ENCODE measurements at regions of chr7 and their contacts with region 1.

Region 1: DNA sequence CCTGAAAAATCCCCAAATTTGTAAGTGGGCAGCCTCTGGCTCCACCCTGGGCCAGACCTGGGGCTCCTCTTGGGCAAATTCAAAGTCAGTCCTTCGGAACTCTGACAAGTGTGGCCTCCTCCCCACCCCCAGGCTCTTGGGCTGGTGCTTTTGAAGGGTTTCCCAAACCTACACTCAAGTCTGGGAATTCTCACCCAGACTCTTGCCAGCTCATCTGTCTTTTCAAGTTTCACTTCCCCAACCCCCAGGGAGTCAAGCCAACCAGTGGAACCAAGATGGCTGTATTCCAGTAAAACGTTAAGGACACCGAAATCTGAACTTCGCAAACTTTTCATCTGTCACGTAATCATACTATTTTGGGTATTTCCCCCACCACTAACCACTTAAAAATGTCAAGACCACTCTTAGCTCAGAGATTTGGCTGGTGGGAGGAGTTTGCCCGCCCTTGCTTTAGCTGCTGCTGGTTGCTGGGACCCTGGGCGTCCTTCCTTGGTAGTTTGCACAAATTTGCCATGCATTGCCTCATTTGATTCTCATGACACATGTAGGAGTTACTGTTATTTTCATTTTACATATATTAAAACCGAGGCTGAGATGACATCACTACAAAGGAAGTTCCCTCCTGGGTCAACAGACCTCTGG is 1.7 kb upstream of the MYO1G start:
- DNase-seq: peak; percentile 59
- ATAC-seq: peak; percentile 10
- H3K4me3 Mint-ChIP-seq: peak overlapping the region; percentile 94
- H3K27ac Mint-ChIP-seq: peak overlapping the region; percentile 93
- H3K4me1 Mint-ChIP-seq: peaks cover 60% of the 10 kb centered on the region
- H3K27me3 Mint-ChIP-seq: no peaks in the 10 kb centered on the region

Region 2: GRCh38 chr7:44962483-44963251 is 17.8 kb before region 1 on chr7:
- POLR2A ChIA-PET with region 1: interaction called, 11 read pairs
- DNase-seq: peak; percentile 35
- ATAC-seq: no peak
- H3K4me3 Mint-ChIP-seq: no peak overlapping the region
- H3K27ac Mint-ChIP-seq: no peak overlapping the region
- H3K4me1 Mint-ChIP-seq: peaks cover 22% of the 10 kb centered on the region
- H3K27me3 Mint-ChIP-seq: no peaks in the 10 kb centered on the region

Region 3: GRCh38 chr7:45033261-45033930 is 52.9 kb after region 1 on chr7:
- POLR2A ChIA-PET with region 1: interaction called, 80 read pairs
- DNase-seq: no peak
- ATAC-seq: peak; percentile 23
- H3K4me3 Mint-ChIP-seq: peak overlapping the region; percentile 65
- H3K27ac Mint-ChIP-seq: peak overlapping the region; percentile 75
- H3K4me1 Mint-ChIP-seq: peaks cover 72% of the 10 kb centered on the region
- H3K27me3 Mint-ChIP-seq: no peaks in the 10 kb centered on the region

Region 4: GRCh38 chr7:45089341-45089891 is 108.9 kb after region 1 on chr7:
- POLR2A ChIA-PET with region 1: no interaction called
- DNase-seq: peak; percentile 70
- ATAC-seq: peak; percentile 62
- H3K4me3 Mint-ChIP-seq: peak overlapping the region; percentile 73
- H3K27ac Mint-ChIP-seq: no peak overlapping the region
- H3K4me1 Mint-ChIP-seq: peaks cover 4% of the 10 kb centered on the region
- H3K27me3 Mint-ChIP-seq: peaks cover 25% of the 10 kb centered on the region

Region 5: DNA sequence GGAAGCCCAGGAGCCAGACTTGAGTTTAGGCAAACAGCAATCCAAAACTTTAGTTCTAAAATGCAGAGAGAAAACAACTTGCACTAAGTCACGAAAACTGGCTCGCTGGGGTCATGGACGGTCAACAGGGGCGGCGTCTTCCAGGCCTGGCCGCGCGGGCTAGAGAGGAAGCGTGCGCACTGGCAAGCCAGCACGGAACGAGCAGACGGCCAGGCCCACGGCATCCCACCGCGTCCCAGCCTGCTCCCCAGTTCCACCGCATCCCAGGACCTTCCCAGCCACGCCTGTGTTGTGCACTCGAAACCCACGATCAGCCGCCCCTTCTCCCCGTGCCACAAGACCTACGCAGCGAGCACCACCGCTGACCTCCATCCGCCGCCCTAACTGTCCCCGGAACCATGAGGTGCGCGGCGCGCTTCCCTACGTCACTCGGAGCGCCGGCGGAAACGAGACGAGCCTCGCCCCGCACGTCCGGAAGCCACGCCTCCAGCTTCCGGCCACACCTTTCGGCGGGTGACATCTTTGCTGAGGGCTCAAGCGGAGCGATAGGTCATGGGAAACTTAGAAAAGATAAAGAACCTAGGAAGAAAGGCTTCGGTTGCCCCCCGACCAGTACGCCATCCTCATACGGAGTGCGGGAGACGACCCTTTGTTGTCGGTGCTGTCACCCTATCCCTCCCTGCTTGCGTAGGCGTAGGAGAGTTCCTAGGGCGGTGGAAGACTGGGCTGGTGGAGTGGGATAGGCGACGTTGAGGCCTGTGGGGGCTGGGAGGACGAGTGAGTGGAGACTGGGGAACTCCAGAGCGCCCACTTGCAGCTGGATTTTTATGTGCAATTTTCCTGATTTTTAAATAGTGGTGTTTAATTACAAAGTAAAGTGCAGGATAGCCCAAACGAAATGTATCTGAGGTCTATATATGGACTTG is 131.0 kb after region 1 on chr7 and contains the start of gene TBRG4:
- POLR2A ChIA-PET with region 1: interaction called, 36 read pairs
- DNase-seq: peak; percentile 97
- ATAC-seq: peak; percentile 86
- H3K4me3 Mint-ChIP-seq: peak within 1 kb of the TSS; percentile 97
- H3K27ac Mint-ChIP-seq: peak within 1 kb of the TSS; percentile 94
- H3K4me1 Mint-ChIP-seq: peaks cover 35% of the 10 kb centered on the region
- H3K27me3 Mint-ChIP-seq: peaks cover 10% of the 10 kb centered on the region
- total RNA-seq, gene TBRG4: 123 to 127 TPM